ENCODE measurements at regions of chr4 and their contacts with region 1.

Region 1: GRCh38 chr4:102429553-102429952 is 71.6 kb upstream of the NFKB1 start:
- DNase-seq: no peak
- H3K4me3 ChIP-seq: no peak overlapping the region
- H3K27ac ChIP-seq: no peak overlapping the region
- H3K4me1 ChIP-seq: peaks cover 0 to 4% (median 0%) of the 10 kb centered on the region in 4 donors
- H3K27me3 ChIP-seq: no peaks in the 10 kb centered on the region
- CTCF ChIP-seq: no peak

Region 2: GRCh38 chr4:102344954-102345794 is 84.4 kb before region 1 on chr4 and contains the start of gene SLC39A8:
- intact Hi-C with region 1: loop called (anchors 5 kb)
- DNase-seq: peak; percentile 83 to 91
- H3K4me3 ChIP-seq: peak within 1 kb of the TSS; percentile 64 to 84
- H3K27ac ChIP-seq: peak within 1 kb of the TSS; percentile 63 to 68
- H3K4me1 ChIP-seq: peaks cover 0 to 11% (median 4%) of the 10 kb centered on the region in 4 donors
- H3K27me3 ChIP-seq: no peaks in the 10 kb centered on the region
- CTCF ChIP-seq: peak; percentile 77 to 84